CD8-positive, alpha-beta memory T cell (primary cell): ENCODE measurements at regions of chr5 and their contacts with region 1.

Region 1: DNA sequence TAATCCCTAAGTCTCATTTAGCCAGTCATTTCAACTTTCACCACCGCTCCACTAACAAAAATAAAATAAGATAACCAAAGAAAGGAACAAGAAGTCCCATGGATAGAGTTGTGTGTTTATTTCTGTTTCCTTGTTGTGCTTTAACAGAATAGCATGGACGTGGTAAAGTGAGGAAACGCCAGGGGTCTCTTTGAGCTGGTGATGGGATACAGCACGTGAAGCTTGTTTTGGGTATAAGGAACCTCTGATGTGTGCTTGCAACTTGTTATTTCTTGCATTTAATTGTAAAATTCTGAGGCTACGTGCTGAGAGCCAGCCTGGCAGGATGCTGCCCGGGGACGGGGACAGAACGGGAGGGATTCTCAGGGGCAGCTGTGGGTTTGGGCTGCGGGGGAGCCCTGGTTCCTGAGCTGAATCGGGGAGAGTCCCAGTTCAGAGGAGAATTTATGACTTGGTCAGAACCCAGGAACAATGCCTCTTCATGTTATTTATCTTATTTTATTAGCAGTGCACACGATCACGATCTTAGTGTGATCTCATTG is 63.4 kb downstream of the ANKRD33B start:
- DNase-seq: no peak
- H3K4me3 ChIP-seq: peak overlapping the region; percentile 85
- H3K4me3 Mint-ChIP-seq: peak overlapping the region; percentile 29 to 91 (median 85)
- H3K27ac ChIP-seq: no peak overlapping the region
- H3K27ac Mint-ChIP-seq: peak overlapping the region in 5 of 8 donors; percentile 9 to 89 (median 72)
- H3K4me1 ChIP-seq: peaks cover 15% of the 10 kb centered on the region
- H3K4me1 Mint-ChIP-seq: peaks cover 23 to 28% (median 25%) of the 10 kb centered on the region in 3 donors
- H3K27me3 ChIP-seq: no peaks in the 10 kb centered on the region
- H3K27me3 Mint-ChIP-seq: peaks cover 4 to 8% of the 10 kb centered on the region in 2 donors

Region 2: DNA sequence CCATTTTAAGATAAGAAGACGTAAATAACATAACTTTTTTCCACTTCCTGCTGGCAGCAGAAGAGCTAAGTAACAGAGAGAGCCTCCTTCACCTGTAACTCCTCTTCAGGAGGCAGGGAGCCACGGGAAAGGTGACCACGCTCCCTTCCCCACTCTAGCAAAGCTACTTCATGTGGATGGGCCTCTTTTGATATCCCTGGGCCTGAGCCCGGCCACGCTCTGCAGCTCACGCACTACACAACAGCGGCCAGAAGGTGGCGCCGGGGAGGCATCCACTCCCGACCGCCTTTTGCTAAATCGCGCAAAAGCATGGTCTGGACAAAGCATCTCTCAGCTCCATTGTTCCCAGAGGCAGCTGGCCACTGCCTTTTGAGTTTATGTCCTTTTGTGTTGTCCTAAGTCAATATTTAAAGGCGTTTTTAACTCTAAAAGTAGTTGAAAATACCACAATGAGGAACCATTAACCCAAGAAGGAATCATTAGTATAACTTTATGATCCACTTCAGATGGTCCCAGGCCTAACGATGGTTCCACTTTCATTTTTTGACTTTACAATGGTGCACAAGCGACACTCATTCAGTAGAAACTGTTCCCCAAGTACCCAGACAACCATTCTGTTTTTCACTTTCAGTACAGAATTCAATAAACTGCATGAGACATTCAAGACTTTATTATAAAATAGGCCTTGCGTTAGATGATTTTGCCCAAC is 343.1 kb before region 1 on chr5:
- CTCF ChIA-PET with region 1: interaction called, 101 read pairs
- POLR2A ChIA-PET with region 1: no interaction called
- DNase-seq: peak; percentile 57 to 78 (median 63)
- H3K4me3 ChIP-seq: no peak overlapping the region
- H3K4me3 Mint-ChIP-seq: peak overlapping the region in 1 of 7 donors; percentile 79
- H3K27ac ChIP-seq: no peak overlapping the region
- H3K27ac Mint-ChIP-seq: no peak overlapping the region
- H3K4me1 ChIP-seq: no peaks in the 10 kb centered on the region
- H3K4me1 Mint-ChIP-seq: peaks cover 8 to 14% (median 12%) of the 10 kb centered on the region in 3 donors
- H3K27me3 ChIP-seq: no peaks in the 10 kb centered on the region
- H3K27me3 Mint-ChIP-seq: peaks cover 2 to 12% of the 10 kb centered on the region in 2 donors

Region 3: GRCh38 chr5:10452768-10453331 is 174.4 kb before region 1 on chr5:
- CTCF ChIA-PET with region 1: interaction called, 32 read pairs
- POLR2A ChIA-PET with region 1: no interaction called
- DNase-seq: peak in 2 of 5 donors; percentile 33
- H3K4me3 ChIP-seq: no peak overlapping the region
- H3K4me3 Mint-ChIP-seq: no peak overlapping the region
- H3K27ac ChIP-seq: no peak overlapping the region
- H3K27ac Mint-ChIP-seq: no peak overlapping the region
- H3K4me1 ChIP-seq: no peaks in the 10 kb centered on the region
- H3K4me1 Mint-ChIP-seq: peaks cover 2 to 18% (median 12%) of the 10 kb centered on the region in 3 donors
- H3K27me3 ChIP-seq: peaks cover 3% of the 10 kb centered on the region
- H3K27me3 Mint-ChIP-seq: no peaks in the 10 kb centered on the region

Region 4: DNA sequence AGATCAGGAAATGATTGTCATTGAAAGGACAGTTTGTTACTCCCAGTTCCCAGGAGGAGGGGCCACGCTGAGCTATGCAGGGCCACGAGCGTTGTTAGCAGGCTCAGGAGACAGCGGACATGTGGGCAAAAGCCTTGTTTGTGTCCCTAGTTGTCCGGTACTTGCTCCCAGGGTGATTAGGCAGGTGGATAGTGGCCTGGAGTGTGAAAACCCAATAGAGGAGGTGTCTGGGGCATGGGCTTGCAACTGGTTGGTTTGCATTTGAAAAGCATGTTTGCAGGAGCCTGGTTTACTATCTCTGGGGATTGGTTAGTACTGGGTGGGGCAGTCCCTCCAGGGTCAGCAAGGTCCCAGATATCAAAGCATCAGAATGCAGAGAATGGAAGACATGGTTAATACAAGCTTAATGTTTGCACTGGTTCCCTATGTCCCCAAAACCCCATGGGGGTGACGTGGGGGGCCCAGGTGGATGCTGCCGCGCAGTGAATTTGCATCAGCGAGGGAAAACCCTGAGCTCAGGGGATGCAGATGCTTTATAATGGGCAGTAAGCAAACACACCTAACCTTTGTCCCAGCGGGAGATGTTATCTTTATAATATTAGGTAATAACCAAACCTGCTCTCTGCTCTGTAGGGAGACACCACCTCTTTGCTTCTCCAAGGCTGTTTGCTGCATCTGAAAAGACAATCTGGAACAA is 145.8 kb before region 1 on chr5:
- CTCF ChIA-PET with region 1: no interaction called
- POLR2A ChIA-PET with region 1: no interaction called
- DNase-seq: no peak
- H3K4me3 ChIP-seq: no peak overlapping the region
- H3K4me3 Mint-ChIP-seq: no peak overlapping the region
- H3K27ac ChIP-seq: no peak overlapping the region
- H3K27ac Mint-ChIP-seq: no peak overlapping the region
- H3K4me1 ChIP-seq: no peaks in the 10 kb centered on the region
- H3K4me1 Mint-ChIP-seq: no peaks in the 10 kb centered on the region
- H3K27me3 ChIP-seq: no peaks in the 10 kb centered on the region
- H3K27me3 Mint-ChIP-seq: peaks cover 6 to 38% of the 10 kb centered on the region in 2 donors

Region 5: DNA sequence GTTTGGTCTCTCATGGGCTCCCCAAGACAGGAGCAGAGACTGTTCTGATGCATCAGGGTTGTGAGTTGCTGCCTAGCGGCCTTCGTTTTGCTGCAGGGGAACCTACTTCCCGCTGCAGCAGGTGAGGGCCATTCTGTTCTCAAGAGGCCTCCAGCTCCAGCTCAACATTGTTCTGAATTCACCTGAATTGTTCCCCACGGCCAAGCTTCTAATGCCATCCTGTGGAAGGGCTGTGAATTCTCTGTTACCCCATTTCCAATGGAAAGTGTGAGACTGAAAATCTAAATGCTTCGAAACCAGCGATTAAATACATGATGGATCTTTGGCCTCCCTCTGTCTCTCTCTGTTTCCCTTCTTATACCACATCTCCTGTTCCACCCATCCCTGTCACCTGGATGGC is 482.9 kb after region 1 on chr5:
- CTCF ChIA-PET with region 1: no interaction called
- POLR2A ChIA-PET with region 1: no interaction called
- DNase-seq: no peak
- H3K4me3 ChIP-seq: no peak overlapping the region
- H3K4me3 Mint-ChIP-seq: no peak overlapping the region
- H3K27ac ChIP-seq: no peak overlapping the region
- H3K27ac Mint-ChIP-seq: no peak overlapping the region
- H3K4me1 ChIP-seq: no peaks in the 10 kb centered on the region
- H3K4me1 Mint-ChIP-seq: no peaks in the 10 kb centered on the region
- H3K27me3 ChIP-seq: no peaks in the 10 kb centered on the region
- H3K27me3 Mint-ChIP-seq: no peaks in the 10 kb centered on the region